ENCODE measurements at regions of chr2 and their contacts with region 1.

Region 1: DNA sequence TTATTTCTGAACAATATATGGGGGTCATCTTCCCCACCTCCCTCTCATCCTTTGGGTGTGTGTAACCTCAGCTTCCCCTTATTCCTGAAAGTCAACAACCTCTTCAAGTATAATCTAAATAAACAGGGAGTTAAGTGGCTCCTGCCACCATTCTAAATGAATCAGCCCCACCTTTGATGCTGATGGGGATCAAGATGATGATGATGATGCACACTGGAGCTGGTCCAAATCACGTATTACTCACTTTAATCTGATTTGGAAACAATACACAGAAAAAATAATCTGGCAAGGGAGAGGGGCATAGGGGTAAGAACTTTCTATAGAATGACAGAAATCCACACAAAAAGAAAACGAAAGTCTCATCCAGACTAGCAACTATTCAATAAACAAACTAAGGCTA is 7.1 kb downstream of the ACVR1 start:
- DNase-seq: no peak
- H3K4me3 Mint-ChIP-seq: no peak overlapping the region
- H3K27ac Mint-ChIP-seq: no peak overlapping the region
- H3K4me1 Mint-ChIP-seq: peaks cover 66% of the 10 kb centered on the region
- H3K27me3 Mint-ChIP-seq: no peaks in the 10 kb centered on the region

Region 2: DNA sequence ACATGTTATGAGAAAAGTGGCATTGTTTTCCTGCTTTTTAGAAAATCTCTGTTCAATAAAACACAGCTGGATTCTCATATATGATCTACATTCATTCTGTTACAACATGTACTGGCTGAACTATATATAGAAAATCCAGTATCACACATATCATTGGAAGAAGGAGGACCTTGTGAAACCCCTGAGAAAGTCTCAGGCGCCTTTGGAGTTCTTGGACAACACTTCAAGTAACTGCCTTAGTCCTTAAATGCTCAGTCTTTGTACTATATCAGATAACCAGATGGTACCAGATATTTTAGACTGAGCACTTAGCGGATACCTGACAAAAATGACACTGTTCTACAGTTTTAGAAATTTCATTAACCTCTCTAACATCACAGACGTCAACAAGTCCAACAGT is 65.0 kb before region 1 on chr2:
- intact Hi-C with region 1: loop called (anchors 2 kb)
- DNase-seq: no peak
- H3K4me3 Mint-ChIP-seq: no peak overlapping the region
- H3K27ac Mint-ChIP-seq: no peak overlapping the region
- H3K4me1 Mint-ChIP-seq: peaks cover 43% of the 10 kb centered on the region
- H3K27me3 Mint-ChIP-seq: no peaks in the 10 kb centered on the region

Region 3: GRCh38 chr2:157890969-157891639 is 22.1 kb after region 1 on chr2:
- intact Hi-C with region 1: no loop called
- DNase-seq: no peak
- H3K4me3 Mint-ChIP-seq: no peak overlapping the region
- H3K27ac Mint-ChIP-seq: peak overlapping the region; percentile 59
- H3K4me1 Mint-ChIP-seq: peaks cover 47% of the 10 kb centered on the region
- H3K27me3 Mint-ChIP-seq: no peaks in the 10 kb centered on the region

Region 4: GRCh38 chr2:157929871-157930667 is 61.1 kb after region 1 on chr2:
- intact Hi-C with region 1: no loop called
- DNase-seq: no peak
- H3K4me3 Mint-ChIP-seq: no peak overlapping the region
- H3K27ac Mint-ChIP-seq: no peak overlapping the region
- H3K4me1 Mint-ChIP-seq: peaks cover 9% of the 10 kb centered on the region
- H3K27me3 Mint-ChIP-seq: no peaks in the 10 kb centered on the region

Region 5: GRCh38 chr2:158144914-158145625 is 276.1 kb after region 1 on chr2:
- intact Hi-C with region 1: no loop called
- DNase-seq: no peak
- H3K4me3 Mint-ChIP-seq: no peak overlapping the region
- H3K27ac Mint-ChIP-seq: no peak overlapping the region
- H3K4me1 Mint-ChIP-seq: no peaks in the 10 kb centered on the region
- H3K27me3 Mint-ChIP-seq: peaks cover 4% of the 10 kb centered on the region